MCF 10A (cell line): ENCODE measurements at regions of chr10 and their contacts with region 1.

Region 1: DNA sequence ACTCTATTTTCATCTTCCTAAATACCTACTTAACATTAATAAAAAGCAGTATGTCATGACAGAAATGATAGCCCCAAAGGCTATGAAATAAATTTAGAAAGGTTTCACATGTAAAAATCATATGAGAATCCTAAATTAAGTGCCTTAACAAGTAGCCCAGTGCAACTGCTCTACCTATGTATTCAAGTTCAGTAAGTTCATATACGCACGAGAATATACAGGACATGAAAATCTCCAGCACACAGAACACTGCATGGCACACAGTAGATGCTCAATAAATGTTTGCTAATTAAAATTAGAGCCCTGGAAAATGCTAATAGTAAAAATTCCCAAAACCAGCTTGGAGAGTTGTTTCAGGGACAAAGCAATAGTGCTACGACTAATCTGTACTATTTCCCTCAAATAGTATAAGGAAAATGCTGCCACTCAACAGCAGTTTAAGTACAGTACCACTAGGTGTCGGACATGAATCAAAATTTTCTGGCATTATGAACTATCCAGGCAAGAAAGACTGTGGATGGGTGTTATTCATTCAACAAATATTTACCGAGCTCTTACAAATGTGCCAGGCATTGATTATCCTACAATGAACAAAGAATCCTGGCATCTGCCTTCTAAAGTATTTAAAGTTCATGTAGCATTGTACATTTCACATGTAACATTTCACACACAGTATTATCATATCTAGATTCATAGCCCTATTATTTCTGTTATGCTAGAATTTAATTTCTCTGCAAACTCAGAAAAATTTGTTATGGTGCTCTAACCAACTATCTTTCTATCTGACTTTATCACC is 80.9 kb downstream of the ARHGAP21 start:
- DNase-seq: peak; percentile 77
- H3K4me3 Mint-ChIP-seq: no peak overlapping the region
- H3K27ac Mint-ChIP-seq: no peak overlapping the region
- H3K4me1 Mint-ChIP-seq: peaks cover 6% of the 10 kb centered on the region
- H3K27me3 Mint-ChIP-seq: no peaks in the 10 kb centered on the region
- CTCF ChIP-seq: peak; percentile 68

Region 2: GRCh38 chr10:24866604-24867583 is 224.1 kb after region 1 on chr10:
- CTCF ChIA-PET with region 1: interaction called, 3 read pairs
- POLR2A ChIA-PET with region 1: no interaction called
- intact Hi-C with region 1: loop called (anchors 10 kb)
- DNase-seq: no peak
- H3K4me3 Mint-ChIP-seq: no peak overlapping the region
- H3K27ac Mint-ChIP-seq: no peak overlapping the region
- H3K4me1 Mint-ChIP-seq: peaks cover 30% of the 10 kb centered on the region
- H3K27me3 Mint-ChIP-seq: no peaks in the 10 kb centered on the region
- CTCF ChIP-seq: no peak

Region 3: DNA sequence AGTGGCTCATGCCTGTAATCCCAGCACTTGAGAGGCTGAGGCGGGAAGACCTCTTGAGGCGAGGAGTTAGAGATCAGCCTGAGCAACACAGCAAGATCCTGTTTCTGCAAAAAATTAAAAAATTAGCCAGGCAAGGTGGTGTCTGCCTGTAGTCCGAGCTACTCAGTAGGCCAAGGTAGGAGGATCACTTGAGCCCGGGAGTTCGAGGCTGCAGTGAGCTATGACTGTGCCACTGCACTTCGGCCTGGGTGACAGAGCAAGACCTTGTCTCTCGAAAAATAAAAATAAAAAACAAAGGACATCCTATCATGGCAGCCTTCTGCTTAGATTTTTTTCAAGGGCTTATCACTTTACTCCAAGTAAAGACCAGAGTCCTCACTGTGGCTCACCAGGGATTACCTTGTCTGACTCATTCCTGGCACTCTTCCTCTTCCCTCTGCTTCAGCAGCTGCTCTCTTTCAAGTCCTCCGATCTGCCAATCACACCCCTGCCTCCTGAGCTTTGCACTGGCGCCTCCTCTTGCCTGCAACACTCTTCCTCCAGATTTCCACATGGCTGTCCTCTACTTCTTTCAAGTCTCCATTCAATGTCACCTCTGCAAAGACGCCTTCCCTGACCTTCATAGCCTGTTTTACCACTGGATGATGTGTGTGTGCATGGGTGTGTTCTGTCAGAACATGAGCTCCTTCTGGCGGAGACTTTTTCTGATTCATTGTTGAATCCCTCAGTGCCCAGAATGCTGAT is 301.9 kb after region 1 on chr10:
- CTCF ChIA-PET with region 1: interaction called, 7 read pairs
- POLR2A ChIA-PET with region 1: interaction called, 4 read pairs
- intact Hi-C with region 1: loop called (anchors 1 kb)
- DNase-seq: peak; percentile 90
- H3K4me3 Mint-ChIP-seq: no peak overlapping the region
- H3K27ac Mint-ChIP-seq: no peak overlapping the region
- H3K4me1 Mint-ChIP-seq: peaks cover 7% of the 10 kb centered on the region
- H3K27me3 Mint-ChIP-seq: no peaks in the 10 kb centered on the region
- CTCF ChIP-seq: peak; percentile 42

Region 4: DNA sequence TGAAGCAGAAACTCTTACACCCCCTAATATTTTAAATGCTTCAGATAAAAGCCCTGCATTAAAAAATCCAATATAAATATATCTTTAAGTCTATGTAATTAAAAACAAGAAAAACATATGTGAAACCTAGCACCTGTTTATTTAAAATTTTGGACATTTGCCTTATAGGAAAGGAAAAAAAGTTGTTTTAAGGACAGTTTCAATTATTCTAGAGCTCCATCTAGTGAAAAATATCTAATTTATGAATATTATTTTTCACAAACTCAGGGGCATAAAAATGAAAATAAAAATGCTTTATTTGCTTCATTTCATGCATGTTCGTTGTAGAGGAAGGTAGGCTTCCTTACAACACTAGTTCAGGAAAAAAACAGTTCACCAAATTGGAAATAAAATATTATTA is 347.0 kb after region 1 on chr10:
- CTCF ChIA-PET with region 1: interaction called, 36 read pairs
- POLR2A ChIA-PET with region 1: interaction called, 5 read pairs
- intact Hi-C with region 1: loop called (anchors 1 kb)
- DNase-seq: peak; percentile 4
- H3K4me3 Mint-ChIP-seq: no peak overlapping the region
- H3K27ac Mint-ChIP-seq: no peak overlapping the region
- H3K4me1 Mint-ChIP-seq: no peaks in the 10 kb centered on the region
- H3K27me3 Mint-ChIP-seq: no peaks in the 10 kb centered on the region
- CTCF ChIP-seq: peak; percentile 37

Region 5: GRCh38 chr10:25304606-25305005 is 661.8 kb after region 1 on chr10:
- CTCF ChIA-PET with region 1: no interaction called
- POLR2A ChIA-PET with region 1: no interaction called
- intact Hi-C with region 1: no loop called
- DNase-seq: peak; percentile 18
- H3K4me3 Mint-ChIP-seq: no peak overlapping the region
- H3K27ac Mint-ChIP-seq: no peak overlapping the region
- H3K4me1 Mint-ChIP-seq: no peaks in the 10 kb centered on the region
- H3K27me3 Mint-ChIP-seq: peaks cover 79% of the 10 kb centered on the region
- CTCF ChIP-seq: no peak